PC-3 (cell line): ENCODE measurements at regions of chr13 and their contacts with region 1.

Region 1: GRCh38 chr13:113562085-113562749 is 22.3 kb upstream of the TFDP1 start:
- DNase-seq: peak; percentile 59
- ATAC-seq: peak; percentile 77
- H3K4me3 ChIP-seq: no peak overlapping the region
- H3K27ac ChIP-seq: no peak overlapping the region
- H3K4me1 ChIP-seq: no peaks in the 10 kb centered on the region
- H3K27me3 ChIP-seq: no peaks in the 10 kb centered on the region
- CTCF ChIP-seq: peak; percentile 72

Region 2: GRCh38 chr13:113586661-113587479 is 24.7 kb after region 1 on chr13:
- CTCF ChIA-PET with region 1: no interaction called
- POLR2A ChIA-PET with region 1: interaction called, 33 read pairs
- intact Hi-C with region 1: no loop called
- DNase-seq: no peak
- ATAC-seq: no peak
- H3K4me3 ChIP-seq: 0 out of 2 replicates have a peak overlapping the region, but pooled peaks have one; percentile 9
- H3K27ac ChIP-seq: no peak overlapping the region
- H3K4me1 ChIP-seq: peaks cover 16% of the 10 kb centered on the region
- H3K27me3 ChIP-seq: no peaks in the 10 kb centered on the region
- CTCF ChIP-seq: no peak

Region 3: DNA sequence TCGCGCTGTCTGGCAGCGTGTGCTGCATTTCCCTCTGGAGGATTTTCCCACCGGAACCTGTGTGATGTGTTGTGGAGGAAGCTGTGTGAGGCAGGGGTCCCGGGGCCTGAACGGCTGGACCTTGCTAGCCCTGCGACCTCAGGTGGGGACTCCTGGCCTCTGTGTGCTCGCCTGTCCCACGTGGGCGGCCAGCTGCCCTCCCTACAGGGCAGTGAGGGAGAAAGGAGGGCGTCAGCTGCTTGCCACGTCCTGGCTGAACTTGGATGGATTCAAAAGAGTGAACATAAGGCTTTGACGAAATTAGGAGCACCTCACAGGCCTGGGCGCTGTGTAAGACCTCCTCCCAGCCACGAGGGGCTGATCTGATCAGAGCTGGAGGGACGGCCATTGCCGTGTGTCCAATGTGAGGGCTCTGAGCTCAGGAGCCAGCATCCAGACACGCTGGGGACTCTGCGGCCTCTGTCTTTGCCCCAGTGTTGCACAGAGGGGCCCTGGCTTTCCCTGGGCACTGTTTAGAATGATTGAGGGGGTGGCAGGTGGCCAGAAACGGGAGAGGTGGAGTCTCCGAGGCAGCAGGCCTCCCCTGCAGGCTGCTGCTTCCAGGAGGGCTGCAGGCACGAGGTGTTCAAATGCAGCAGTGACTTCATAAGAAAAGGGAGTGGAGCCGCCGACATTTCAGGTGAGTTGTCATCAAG is 35.3 kb after region 1 on chr13:
- CTCF ChIA-PET with region 1: no interaction called
- POLR2A ChIA-PET with region 1: no interaction called
- intact Hi-C with region 1: no loop called
- DNase-seq: no peak
- ATAC-seq: no peak
- H3K4me3 ChIP-seq: no peak overlapping the region
- H3K27ac ChIP-seq: no peak overlapping the region
- H3K4me1 ChIP-seq: no peaks in the 10 kb centered on the region
- H3K27me3 ChIP-seq: no peaks in the 10 kb centered on the region
- CTCF ChIP-seq: no peak